ENCODE measurements at regions of chr14 and their contacts with region 1.

Region 1: DNA sequence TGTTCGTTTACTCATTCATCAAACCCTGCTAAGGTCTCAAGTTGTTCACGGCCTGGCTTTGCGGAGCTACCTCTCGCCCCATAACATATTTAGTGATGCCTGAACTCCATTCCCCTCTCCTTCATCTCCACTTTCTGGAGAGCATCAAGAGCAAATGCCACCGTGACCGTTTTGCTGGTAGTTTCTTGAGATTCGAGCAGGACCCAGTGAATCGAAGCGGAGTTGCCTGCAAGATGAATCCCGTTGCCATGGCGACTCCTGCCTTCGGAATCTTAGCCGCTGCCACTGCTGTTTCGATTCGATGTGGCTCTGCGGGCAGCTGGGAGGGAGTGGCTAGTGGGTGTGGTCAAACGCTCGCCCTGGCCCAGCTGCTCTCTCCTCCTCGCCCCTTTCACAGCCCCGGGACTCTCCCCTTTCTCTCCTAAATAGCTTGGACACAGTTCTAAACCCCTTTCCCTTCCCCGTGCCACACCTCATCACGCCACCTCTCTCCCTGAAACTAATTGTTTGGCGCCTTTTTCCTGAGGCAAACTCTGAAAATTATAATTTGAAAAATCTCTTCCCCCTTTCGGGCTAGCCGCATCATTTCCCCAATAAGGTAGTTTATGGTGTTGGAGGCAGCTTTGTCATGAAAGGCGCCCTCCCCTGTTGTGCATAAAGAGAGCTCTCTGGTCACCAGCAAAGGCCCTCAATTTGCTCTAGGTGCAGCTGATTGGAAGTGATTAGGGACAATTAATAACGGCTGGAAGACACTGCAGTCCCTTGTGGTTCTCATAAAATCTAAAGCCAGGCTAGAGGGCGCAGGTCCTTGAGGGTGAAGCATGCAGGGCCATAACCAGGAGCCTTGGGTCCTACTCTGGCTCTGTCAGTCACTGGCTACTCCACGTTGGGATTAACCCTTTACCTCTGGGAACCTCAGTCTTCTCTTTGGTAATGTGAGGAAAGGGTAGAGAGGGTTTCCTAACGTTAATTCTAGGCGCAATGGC is 1.6 kb downstream of the DAAM1 start:
- DNase-seq: peak; percentile 85 to 90 (median 89)
- ATAC-seq: peak; percentile 47
- H3K4me3 ChIP-seq: peak overlapping the region; percentile 64 to 75
- H3K27ac ChIP-seq: peak overlapping the region; percentile 91 to 97
- H3K4me1 ChIP-seq: peaks cover 0 to 40% of the 10 kb centered on the region in 2 donors
- H3K27me3 ChIP-seq: no peaks in the 10 kb centered on the region
- CTCF ChIP-seq: no peak

Region 2: DNA sequence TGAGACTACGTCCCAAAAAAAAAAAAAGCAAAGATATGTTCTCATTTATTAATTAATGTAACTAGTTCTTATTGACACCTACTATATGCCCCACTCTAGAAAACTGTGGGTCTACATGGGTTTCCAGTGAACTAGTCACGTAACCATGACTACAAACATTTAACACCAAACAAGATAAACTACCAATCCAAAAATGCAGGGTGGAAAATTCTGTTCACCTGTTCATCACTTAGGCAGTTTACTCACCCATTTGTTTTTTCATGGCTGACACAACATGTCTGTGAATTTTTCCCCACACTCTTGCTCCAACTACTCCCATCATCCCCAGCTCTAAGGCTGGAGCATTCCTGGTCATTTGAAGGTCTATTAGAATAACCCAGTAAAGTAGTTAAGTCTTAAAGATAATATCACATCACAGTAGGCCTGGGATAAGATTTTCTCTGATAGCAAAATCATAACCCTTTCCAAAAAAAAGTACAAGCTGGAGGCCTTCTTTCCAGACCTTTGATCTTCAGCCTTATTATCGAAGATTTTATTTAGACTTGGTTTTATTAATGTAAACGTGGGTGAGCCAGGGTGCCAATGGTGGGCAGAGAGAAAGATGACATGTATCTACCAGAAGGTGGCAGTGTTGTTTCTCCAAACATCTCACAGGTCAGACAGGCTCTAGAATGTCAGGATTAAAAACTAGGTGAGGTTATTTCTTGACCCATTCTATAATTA is 63.2 kb before region 1 on chr14:
- intact Hi-C with region 1: no loop called
- DNase-seq: peak in 2 of 4 donors; percentile 39 to 65
- ATAC-seq: peak; percentile 95
- H3K4me3 ChIP-seq: no peak overlapping the region
- H3K27ac ChIP-seq: no peak overlapping the region
- H3K4me1 ChIP-seq: no peaks in the 10 kb centered on the region
- H3K27me3 ChIP-seq: no peaks in the 10 kb centered on the region
- CTCF ChIP-seq: peak; percentile 60 to 81

Region 3: DNA sequence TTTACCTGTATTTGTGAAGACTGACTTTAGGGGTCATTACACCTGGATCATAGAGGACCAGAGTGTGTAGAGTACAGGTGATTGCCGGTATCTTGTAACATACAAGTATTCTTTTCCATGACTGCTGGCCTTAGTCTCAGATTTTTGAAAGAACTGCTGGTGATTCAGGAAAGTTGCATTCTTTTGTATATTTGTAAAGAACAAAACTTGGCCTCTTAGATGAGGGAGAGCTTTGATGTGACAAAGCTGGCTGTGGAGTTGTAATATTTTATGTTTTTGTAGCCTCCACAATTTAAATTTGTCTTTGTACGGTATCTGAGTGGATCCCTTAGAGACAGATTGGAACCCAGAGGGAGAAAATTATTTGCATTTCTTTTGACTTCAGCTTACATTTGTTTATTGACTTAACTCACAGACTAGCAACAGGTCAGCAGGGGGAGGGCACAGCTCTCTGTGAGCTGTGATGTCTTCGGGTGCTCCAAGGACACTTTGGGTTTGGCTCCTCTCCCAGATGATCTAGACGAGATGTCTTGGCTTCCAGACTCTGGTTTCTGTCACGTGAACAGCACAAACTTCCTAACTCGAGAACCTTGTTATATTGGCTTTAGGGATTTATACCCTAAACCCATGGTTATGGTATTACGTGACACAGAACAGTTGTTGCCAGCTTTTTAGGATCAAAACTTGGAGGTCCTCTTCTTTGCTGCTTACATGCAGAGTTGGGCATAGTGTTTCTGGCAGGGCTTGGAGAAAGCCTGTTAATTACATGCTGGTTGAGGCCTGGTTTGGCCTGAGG is 64.3 kb after region 1 on chr14:
- intact Hi-C with region 1: loop called in 1 of 2 experiments (anchors 10 kb)
- DNase-seq: peak in 3 of 4 donors; percentile 79 to 92 (median 83)
- ATAC-seq: peak; percentile 87
- H3K4me3 ChIP-seq: no peak overlapping the region
- H3K27ac ChIP-seq: peak overlapping the region; percentile 72 to 84
- H3K4me1 ChIP-seq: peaks cover 34 to 36% of the 10 kb centered on the region in 2 donors
- H3K27me3 ChIP-seq: no peaks in the 10 kb centered on the region
- CTCF ChIP-seq: no peak

Measured in left lung (tissue), 14 donors.